ENCODE measurements at regions of chr7 and their contacts with region 1.

Region 1: DNA sequence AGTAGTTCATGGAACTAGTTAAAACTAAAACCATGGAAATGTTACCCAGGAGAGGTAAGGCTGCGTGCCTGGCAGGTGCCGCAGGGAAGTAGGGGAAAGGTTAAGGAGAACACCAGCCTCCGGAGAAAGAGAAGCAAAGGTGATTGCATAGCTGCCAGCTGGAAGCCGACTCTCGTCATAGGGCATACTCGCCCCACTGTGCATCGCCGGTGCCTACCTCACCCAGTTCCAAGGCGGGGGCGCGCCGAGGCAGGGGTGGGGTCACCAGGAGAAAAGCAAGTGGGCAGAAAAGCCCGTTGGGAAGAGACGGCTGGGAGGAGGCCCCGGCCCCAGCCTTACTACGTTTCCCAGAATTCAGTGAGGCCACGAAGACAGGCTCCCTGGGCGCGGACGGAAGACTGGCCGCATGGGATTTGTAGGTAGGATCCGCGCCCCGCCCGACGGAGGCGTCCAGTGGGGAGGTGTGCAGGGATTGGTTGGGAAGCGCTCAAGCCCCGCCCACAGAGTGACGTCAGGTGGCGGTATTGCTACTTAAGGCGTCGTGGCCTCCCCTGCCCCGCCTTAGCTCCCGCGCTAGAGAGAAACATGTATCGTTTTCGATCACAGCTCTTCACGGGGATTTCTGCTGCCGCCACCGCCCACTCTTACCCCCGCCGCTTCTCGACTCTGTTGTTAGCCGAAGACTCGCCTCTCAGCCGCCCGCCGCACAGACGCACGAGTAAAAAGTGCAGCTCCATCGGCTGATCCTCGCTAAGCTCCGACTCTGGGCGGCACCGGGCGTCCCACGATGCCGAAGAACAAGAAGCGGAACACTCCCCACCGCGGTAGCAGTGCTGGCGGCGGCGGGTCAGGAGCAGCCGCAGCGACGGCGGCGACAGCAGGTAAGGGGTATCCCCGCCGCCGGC is at the start of gene IFRD1:
- DNase-seq: peak; percentile 98 to 100 (median 100)
- ATAC-seq: peak; percentile 93 to 97 (median 94)
- H3K4me3 ChIP-seq: peak within 1 kb of the TSS; percentile 73 to 99 (median 86)
- H3K27ac ChIP-seq: peak within 1 kb of the TSS; percentile 90 to 100 (median 97)
- H3K4me1 ChIP-seq: peaks cover 4 to 42% (median 27%) of the 10 kb centered on the region in 12 donors
- H3K27me3 ChIP-seq: no peaks in the 10 kb centered on the region
- CTCF ChIP-seq: peak in 1 of 12 donors; percentile 7
- POLR2A ChIP-seq: peak; percentile 96 to 100
- total RNA-seq, gene IFRD1: 11.3 to 50.6 (median 26.3) TPM

Region 2: DNA sequence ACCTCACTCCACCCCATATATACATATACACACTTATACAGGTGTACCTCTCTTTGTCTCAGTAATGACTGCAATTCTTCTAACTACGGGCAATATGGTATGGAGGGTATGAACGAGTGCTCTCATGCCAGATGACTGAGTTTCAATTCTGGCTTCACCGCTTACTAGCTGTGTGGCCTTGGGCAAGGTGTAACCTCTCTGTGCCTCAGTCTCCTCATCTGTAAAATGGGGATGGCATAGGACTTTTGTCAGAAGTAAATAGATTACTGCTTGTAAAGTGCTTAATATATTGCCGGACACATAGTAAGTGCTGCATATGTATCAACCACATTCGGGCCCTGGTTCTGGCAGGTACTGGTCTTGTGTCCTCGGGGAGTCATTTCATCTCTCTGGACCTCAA is 60.0 kb before region 1 on chr7:
- intact Hi-C with region 1: loop called in 1 of 10 experiments (anchors 5 kb)
- DNase-seq: no peak
- ATAC-seq: no peak
- H3K4me3 ChIP-seq: no peak overlapping the region
- H3K27ac ChIP-seq: no peak overlapping the region
- H3K4me1 ChIP-seq: peaks cover 0 to 7% (median 2%) of the 10 kb centered on the region in 12 donors
- H3K27me3 ChIP-seq: no peaks in the 10 kb centered on the region
- CTCF ChIP-seq: no peak
- POLR2A ChIP-seq: no peak

Region 3: GRCh38 chr7:112481833-112482670 is 31.9 kb after region 1 on chr7:
- intact Hi-C with region 1: loop called in 1 of 10 experiments (anchors 2 kb)
- DNase-seq: peak in 4 of 5 donors; percentile 47 to 72 (median 66)
- ATAC-seq: peak; percentile 80 to 87 (median 86)
- H3K4me3 ChIP-seq: peak overlapping the region in 7 of 12 donors; percentile 0 to 52 (median 16)
- H3K27ac ChIP-seq: peak overlapping the region; percentile 36 to 96 (median 80)
- H3K4me1 ChIP-seq: peaks cover 0 to 53% (median 33%) of the 10 kb centered on the region in 12 donors
- H3K27me3 ChIP-seq: no peaks in the 10 kb centered on the region
- CTCF ChIP-seq: no peak
- POLR2A ChIP-seq: peak in 1 of 2 donors; percentile 28

Region 4: DNA sequence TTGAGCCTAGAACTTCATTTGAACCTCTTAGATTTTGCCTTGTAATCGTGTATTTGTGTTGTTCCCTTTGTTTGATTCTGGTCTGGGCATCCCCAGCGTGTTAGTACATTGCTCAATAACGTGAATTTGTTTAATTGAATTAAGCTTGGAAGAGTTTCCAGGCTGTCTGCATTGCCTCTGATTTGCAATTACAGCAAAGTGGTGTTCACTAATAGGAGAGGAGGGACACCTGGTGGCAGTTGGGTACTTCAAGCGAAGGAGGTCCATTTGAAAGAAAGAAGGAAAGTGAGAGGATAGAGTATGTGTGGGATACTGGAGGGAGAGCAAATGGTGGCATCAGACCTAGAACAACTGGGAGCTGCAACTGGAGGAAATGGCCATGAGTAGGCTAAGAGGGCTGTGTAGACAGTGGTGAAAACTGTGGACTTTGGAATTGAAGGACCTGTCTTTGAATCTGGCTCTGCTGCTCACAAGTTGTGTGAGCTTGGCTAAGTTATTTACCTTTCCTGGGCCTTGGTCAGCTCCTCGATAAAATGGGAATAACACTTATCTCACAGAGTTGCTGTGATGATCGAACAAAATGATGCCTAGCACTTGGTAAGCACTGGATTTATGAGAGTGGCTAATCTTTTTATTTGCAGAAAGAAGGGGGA is 45.8 kb after region 1 on chr7:
- intact Hi-C with region 1: no loop called
- DNase-seq: peak in 2 of 5 donors; percentile 46 to 55
- ATAC-seq: peak; percentile 52 to 90 (median 89)
- H3K4me3 ChIP-seq: no peak overlapping the region
- H3K27ac ChIP-seq: peak overlapping the region in 1 of 12 donors; percentile 30
- H3K4me1 ChIP-seq: no peaks in the 10 kb centered on the region
- H3K27me3 ChIP-seq: no peaks in the 10 kb centered on the region
- CTCF ChIP-seq: peak; percentile 35 to 70 (median 62)
- POLR2A ChIP-seq: no peak

Region 5: DNA sequence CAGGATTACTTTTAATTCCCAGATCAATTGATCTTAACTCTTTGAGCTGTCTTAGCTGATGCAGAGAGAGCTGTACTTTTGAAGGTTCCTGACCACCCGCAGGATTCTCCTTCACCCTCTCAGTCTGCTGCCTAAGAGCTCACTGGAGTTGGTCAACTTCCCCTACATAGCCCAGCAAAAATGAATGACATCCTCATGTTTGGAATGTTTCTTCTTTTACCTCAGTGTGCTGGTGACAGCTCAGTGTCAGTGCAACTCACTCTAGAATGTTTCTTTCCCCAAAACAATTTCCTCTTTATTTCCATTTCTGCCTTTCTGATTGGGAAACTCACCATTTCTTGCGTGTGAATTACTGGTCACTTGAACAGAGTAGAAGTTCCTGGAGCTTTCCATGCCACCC is 79.4 kb after region 1 on chr7:
- intact Hi-C with region 1: no loop called
- DNase-seq: no peak
- ATAC-seq: no peak
- H3K4me3 ChIP-seq: no peak overlapping the region
- H3K27ac ChIP-seq: no peak overlapping the region
- H3K4me1 ChIP-seq: no peaks in the 10 kb centered on the region
- H3K27me3 ChIP-seq: no peaks in the 10 kb centered on the region
- CTCF ChIP-seq: no peak
- POLR2A ChIP-seq: no peak

Region 6: DNA sequence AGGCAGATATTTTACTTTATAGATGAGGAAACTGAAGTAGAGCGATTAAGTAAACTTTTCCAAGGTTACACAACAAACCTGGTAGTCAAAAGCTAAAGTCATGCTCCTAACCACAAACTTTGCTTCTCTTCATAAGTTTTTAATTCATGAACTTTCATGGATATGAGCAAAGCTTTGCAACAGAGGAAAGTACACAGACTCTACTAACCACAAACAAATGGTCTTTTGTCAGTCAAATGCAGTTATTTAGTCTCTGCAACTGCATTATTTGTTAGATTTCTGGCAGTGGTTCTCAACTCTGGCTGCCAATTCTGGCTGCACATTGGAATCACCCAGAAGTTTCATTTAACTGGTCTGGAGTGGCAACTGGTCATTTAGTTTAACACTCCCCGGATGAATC is 480.6 kb after region 1 on chr7:
- intact Hi-C with region 1: no loop called
- DNase-seq: no peak
- ATAC-seq: peak in 1 of 4 donors; percentile 43
- H3K4me3 ChIP-seq: no peak overlapping the region
- H3K27ac ChIP-seq: peak overlapping the region in 1 of 12 donors; percentile 25
- H3K4me1 ChIP-seq: peaks cover 0 to 39% (median 2%) of the 10 kb centered on the region in 12 donors
- H3K27me3 ChIP-seq: no peaks in the 10 kb centered on the region
- CTCF ChIP-seq: no peak
- POLR2A ChIP-seq: no peak

Region 7: DNA sequence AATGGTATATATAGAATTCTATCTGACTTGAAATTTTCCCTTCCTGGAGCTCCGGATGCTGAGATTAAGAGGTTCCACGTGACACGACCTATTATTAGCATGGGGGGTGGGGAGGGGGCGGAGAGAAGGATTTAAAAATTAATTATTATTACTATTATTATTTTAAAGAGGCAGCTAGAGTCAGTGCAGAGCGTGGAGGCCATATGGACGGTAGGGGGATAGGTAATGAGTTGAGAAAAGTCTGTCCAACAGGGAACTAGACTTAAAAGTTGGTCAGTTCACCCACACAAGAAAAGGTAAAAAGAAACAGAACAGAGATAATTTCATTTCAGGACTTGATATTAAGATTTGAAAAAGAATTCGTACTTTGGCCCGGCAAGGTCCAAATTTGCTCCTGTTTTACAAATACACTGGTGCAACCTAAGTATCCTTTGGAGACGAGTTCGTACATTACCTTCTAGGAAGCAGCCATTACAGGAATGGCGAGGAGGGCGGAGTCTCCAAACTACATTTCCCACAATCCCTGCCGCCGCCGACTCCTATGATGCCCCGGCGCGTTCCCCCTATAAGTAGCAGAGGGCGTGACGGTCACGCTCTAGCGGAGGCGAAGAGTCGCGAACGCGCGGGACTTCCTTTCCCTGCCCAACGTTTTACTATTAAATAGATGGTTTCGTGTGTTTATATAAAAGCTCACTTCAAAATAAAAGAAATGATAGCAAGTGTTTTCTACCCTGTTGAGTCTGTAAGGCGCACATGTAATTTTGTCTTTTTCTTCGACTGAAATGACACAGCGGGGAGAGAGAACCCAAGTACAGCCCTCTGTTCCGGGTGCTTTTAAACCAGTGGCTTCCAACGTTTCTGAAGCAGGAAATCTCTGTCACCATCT is 668.2 kb after region 1 on chr7 and contains the start of gene SMIM30:
- intact Hi-C with region 1: loop called in 1 of 10 experiments (anchors 5 kb)
- DNase-seq: peak; percentile 94 to 96 (median 95)
- ATAC-seq: peak; percentile 100
- H3K4me3 ChIP-seq: peak within 1 kb of the TSS; percentile 33 to 79 (median 66)
- H3K27ac ChIP-seq: peak within 1 kb of the TSS; percentile 69 to 91 (median 80)
- H3K4me1 ChIP-seq: peaks cover 0 to 30% (median 9%) of the 10 kb centered on the region in 12 donors
- H3K27me3 ChIP-seq: no peaks in the 10 kb centered on the region
- CTCF ChIP-seq: no peak
- POLR2A ChIP-seq: peak; percentile 50 to 96
- total RNA-seq, gene SMIM30: 72.4 to 180 (median 137) TPM

Measured in heart left ventricle (tissue), 16 donors.